ENCODE measurements at regions of chr11 and their contacts with region 1.

Region 1: DNA sequence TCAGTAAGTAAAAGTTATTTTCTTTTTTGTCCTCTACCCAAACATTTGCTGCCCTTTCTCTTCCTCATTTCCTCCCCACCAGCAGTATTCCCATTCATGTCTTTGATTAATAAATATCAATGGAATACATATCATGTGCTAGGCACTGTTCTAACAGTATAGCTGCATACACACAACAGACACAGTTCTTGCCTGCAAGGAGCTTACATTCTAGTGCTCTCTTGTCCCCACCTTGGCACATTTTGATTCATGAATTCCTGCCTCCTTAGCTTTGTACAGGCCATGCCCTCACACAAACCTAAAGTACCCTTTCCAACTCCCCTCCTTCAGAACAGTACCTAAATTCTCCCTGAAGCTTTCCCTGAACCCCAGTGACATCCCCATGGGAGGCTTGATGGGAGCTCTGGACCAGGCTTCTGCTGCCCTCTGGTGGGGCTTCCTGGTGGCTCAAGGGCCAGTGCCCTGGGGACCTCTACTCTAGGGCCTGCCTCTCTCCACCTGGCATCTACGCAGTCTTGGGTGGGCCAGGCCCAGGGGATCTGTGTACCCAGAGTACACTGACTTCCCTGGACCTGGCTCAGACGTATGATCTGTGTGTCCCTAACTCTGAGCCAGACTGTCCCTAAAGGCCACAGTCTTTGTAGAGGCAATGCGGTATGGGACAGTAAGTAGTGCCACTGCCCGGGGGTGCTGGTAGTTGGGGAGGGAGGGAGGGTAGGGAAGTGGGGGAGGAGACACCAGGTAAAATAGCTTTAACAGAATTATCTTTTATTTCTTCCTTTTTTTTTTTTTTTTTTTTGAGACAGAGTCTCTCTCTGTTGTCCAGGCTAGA is 14.1 kb downstream of the RPS13 start:
- DNase-seq: peak in 4 of 9 experiments; percentile 27 to 53 (median 40)
- ATAC-seq: peak; percentile 48
- H3K4me3 ChIP-seq: no peak overlapping the region
- H3K4me3 Mint-ChIP-seq: no peak overlapping the region
- H3K27ac ChIP-seq: no peak overlapping the region
- H3K27ac Mint-ChIP-seq: no peak overlapping the region
- H3K4me1 ChIP-seq: no peaks in the 10 kb centered on the region
- H3K4me1 Mint-ChIP-seq: no peaks in the 10 kb centered on the region
- H3K27me3 ChIP-seq: no peaks in the 10 kb centered on the region
- H3K27me3 Mint-ChIP-seq: no peaks in the 10 kb centered on the region
- CTCF ChIP-seq: no peak

Region 2: DNA sequence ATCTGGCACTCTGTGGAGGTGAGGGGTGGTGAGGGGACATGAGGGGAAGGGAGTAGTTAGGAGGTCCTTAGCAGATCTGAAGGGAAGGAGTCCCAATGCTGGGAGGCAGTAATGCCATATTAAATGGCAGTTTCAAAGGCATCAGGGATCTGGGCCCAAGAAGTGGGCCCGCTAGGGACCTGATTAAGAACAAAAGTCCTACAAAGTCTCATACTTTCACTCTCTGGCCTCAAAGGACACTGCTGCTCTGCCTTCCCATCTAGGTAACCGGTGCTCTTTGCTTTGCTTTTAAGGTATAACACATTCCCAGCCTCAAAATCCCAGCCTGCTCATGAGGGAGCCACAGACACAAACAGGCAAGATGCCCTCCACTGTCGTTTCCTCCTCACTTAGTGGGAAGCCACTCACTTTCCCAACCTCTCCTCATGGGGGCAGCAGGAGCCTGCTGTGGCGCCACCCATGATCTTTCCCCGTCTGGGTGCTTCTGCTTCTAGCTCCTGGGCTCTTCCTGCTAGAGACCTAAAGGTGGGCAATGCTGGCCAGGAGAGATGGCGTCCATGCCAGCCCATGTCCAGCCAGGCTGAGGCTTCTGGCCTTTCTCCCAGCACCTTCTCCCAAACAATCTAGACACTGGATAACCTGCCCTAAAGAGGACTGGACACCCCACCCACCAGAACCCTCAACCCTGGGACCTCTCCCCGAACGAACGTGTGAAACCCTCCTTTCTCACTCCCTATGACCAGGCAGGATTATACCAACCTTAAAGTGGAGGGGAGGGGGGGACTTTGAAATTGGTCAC is 117.5 kb before region 1 on chr11:
- CTCF ChIA-PET with region 1: interaction called, 11 read pairs
- POLR2A ChIA-PET with region 1: no interaction called
- intact Hi-C with region 1: loop called in 1 of 2 experiments (anchors 2 kb)
- DNase-seq: peak in 4 of 9 experiments; percentile 4 to 55 (median 30)
- ATAC-seq: no peak
- H3K4me3 ChIP-seq: no peak overlapping the region
- H3K4me3 Mint-ChIP-seq: no peak overlapping the region
- H3K27ac ChIP-seq: no peak overlapping the region
- H3K27ac Mint-ChIP-seq: no peak overlapping the region
- H3K4me1 ChIP-seq: no peaks in the 10 kb centered on the region
- H3K4me1 Mint-ChIP-seq: no peaks in the 10 kb centered on the region
- H3K27me3 ChIP-seq: no peaks in the 10 kb centered on the region
- H3K27me3 Mint-ChIP-seq: no peaks in the 10 kb centered on the region
- CTCF ChIP-seq: no peak

Region 3: GRCh38 chr11:17046690-17047089 is 16.7 kb before region 1 on chr11:
- CTCF ChIA-PET with region 1: no interaction called
- POLR2A ChIA-PET with region 1: no interaction called
- intact Hi-C with region 1: loop called in 1 of 2 experiments (anchors 1 kb)
- DNase-seq: no peak
- ATAC-seq: no peak
- H3K4me3 ChIP-seq: no peak overlapping the region
- H3K4me3 Mint-ChIP-seq: no peak overlapping the region
- H3K27ac ChIP-seq: no peak overlapping the region
- H3K27ac Mint-ChIP-seq: no peak overlapping the region
- H3K4me1 ChIP-seq: no peaks in the 10 kb centered on the region
- H3K4me1 Mint-ChIP-seq: no peaks in the 10 kb centered on the region
- H3K27me3 ChIP-seq: no peaks in the 10 kb centered on the region
- H3K27me3 Mint-ChIP-seq: peaks cover 5% of the 10 kb centered on the region
- CTCF ChIP-seq: no peak

Region 4: DNA sequence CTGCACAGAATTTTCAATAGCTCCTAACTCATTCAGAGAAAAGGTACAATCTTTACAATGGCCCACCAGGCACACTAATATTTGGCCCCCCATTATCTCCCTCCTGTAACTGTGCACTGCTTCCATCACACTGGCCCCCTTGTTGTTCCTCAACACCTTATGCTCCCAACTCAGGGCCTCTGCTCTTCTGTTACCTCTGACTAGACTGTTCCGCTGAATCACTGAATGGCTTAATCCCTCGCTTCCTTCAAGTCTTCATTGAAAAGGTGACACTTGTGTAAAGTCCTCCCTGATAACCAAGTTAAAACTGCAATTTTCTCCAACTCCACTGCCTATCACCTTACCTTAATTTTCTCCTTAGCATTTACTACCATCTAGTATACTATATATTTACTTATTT is 122.6 kb after region 1 on chr11:
- CTCF ChIA-PET with region 1: no interaction called
- POLR2A ChIA-PET with region 1: no interaction called
- intact Hi-C with region 1: no loop called
- DNase-seq: no peak
- ATAC-seq: no peak
- H3K4me3 ChIP-seq: no peak overlapping the region
- H3K4me3 Mint-ChIP-seq: no peak overlapping the region
- H3K27ac ChIP-seq: no peak overlapping the region
- H3K27ac Mint-ChIP-seq: no peak overlapping the region
- H3K4me1 ChIP-seq: no peaks in the 10 kb centered on the region
- H3K4me1 Mint-ChIP-seq: peaks cover 28% of the 10 kb centered on the region
- H3K27me3 ChIP-seq: no peaks in the 10 kb centered on the region
- H3K27me3 Mint-ChIP-seq: no peaks in the 10 kb centered on the region
- CTCF ChIP-seq: no peak

Region 5: DNA sequence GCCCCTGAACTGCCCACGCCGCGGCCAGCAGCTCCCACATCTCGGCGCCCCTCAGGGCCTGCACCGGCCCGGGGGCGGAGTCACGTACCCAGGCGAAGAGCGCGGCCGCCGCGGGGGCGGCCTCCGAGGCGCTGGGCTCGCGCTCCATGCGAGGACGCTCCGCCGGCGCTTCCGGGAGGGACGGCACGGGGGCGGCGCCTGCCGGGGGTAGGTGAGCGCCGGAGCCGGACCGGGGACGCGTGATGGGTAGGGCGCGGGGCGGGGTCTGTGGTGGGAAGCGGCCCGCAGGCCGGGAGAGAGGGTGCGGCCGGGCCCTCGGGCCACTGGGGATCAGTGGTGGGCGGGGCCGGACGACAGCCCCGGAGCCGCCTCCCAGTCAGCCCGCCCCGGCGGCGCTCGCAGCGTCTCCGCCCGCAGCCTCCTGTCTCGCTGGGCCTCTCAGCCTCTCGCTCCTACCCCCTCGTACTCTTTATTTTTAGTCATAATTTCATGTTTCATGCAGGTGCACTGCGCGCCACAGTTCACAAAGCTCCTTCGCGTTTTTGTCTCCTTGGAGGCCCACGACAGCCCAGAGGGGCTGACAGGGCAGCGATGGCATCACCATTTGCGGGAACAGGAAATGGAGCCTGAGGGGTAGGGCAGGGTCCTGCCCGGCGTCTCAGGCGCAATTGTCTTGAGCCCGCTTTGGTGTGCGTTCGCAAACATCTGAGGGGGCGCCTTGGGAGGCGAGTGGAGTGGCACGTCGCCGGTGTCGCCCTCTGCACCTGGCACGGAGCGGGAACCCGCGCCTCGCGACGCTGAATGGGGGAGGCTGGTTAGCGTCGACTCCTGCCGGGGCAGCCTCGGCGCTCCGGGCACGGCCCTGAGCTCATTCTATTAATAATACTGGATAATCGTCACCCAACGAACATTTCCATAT is 949.7 kb after region 1 on chr11 and contains the start of gene SERGEF:
- CTCF ChIA-PET with region 1: no interaction called
- POLR2A ChIA-PET with region 1: no interaction called
- intact Hi-C with region 1: no loop called
- DNase-seq: peak; percentile 80 to 97 (median 93)
- ATAC-seq: peak; percentile 82
- H3K4me3 ChIP-seq: peak within 1 kb of the TSS; percentile 94 to 99
- H3K4me3 Mint-ChIP-seq: peak within 1 kb of the TSS; percentile 99
- H3K27ac ChIP-seq: peak within 1 kb of the TSS; percentile 90
- H3K27ac Mint-ChIP-seq: peak within 1 kb of the TSS; percentile 97
- H3K4me1 ChIP-seq: peaks cover 16% of the 10 kb centered on the region
- H3K4me1 Mint-ChIP-seq: peaks cover 32% of the 10 kb centered on the region
- H3K27me3 ChIP-seq: no peaks in the 10 kb centered on the region
- H3K27me3 Mint-ChIP-seq: no peaks in the 10 kb centered on the region
- CTCF ChIP-seq: peak; percentile 8
- total RNA-seq, gene SERGEF: 36.6 to 44.7 TPM